ENCODE measurements at regions of chr9 and their contacts with region 1.

Region 1: GRCh38 chr9:17669206-17669605 is 90.3 kb downstream of the SH3GL2 start:
- DNase-seq: no peak
- H3K4me3 ChIP-seq: no peak overlapping the region
- H3K27ac ChIP-seq: no peak overlapping the region
- H3K4me1 ChIP-seq: no peaks in the 10 kb centered on the region
- H3K27me3 ChIP-seq: no peaks in the 10 kb centered on the region
- CTCF ChIP-seq: no peak

Region 2: DNA sequence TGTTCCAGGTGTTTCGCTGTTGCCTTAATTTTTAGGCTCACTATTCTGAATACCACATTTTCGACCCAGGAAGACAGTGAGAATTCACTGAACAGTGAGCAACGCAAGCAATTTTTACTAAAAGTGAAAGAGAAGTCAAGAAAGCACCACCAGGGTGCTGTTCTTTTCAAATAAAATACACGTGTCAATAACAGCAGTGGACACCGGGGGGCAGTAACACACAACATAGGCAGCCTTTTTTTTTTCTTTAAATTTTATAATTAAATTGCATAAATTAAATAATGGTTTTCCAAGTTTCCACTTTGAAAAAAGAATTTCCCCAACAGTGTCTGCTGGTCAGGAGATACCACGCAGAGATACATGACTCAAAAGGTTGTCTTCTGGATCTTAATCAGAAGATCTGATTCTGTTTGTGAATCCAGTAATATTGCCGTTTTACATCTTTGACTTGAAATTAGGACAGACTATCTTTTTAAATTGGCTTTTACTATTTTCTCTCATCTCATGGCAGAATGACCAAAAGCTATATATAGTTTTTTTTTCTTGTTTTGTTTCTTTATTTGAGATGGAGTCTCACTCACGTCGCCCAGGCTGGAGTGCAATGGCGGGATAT is 137.5 kb before region 1 on chr9:
- intact Hi-C with region 1: no loop called
- DNase-seq: no peak
- H3K4me3 ChIP-seq: no peak overlapping the region
- H3K27ac ChIP-seq: no peak overlapping the region
- H3K4me1 ChIP-seq: no peaks in the 10 kb centered on the region
- H3K27me3 ChIP-seq: peaks cover 12% of the 10 kb centered on the region
- CTCF ChIP-seq: peak; percentile 70

Region 3: GRCh38 chr9:17571825-17572224 is 97.4 kb before region 1 on chr9:
- intact Hi-C with region 1: loop called (anchors 5 kb)
- DNase-seq: no peak
- H3K4me3 ChIP-seq: no peak overlapping the region
- H3K27ac ChIP-seq: no peak overlapping the region
- H3K4me1 ChIP-seq: no peaks in the 10 kb centered on the region
- H3K27me3 ChIP-seq: peaks cover 23% of the 10 kb centered on the region
- CTCF ChIP-seq: no peak

Region 4: DNA sequence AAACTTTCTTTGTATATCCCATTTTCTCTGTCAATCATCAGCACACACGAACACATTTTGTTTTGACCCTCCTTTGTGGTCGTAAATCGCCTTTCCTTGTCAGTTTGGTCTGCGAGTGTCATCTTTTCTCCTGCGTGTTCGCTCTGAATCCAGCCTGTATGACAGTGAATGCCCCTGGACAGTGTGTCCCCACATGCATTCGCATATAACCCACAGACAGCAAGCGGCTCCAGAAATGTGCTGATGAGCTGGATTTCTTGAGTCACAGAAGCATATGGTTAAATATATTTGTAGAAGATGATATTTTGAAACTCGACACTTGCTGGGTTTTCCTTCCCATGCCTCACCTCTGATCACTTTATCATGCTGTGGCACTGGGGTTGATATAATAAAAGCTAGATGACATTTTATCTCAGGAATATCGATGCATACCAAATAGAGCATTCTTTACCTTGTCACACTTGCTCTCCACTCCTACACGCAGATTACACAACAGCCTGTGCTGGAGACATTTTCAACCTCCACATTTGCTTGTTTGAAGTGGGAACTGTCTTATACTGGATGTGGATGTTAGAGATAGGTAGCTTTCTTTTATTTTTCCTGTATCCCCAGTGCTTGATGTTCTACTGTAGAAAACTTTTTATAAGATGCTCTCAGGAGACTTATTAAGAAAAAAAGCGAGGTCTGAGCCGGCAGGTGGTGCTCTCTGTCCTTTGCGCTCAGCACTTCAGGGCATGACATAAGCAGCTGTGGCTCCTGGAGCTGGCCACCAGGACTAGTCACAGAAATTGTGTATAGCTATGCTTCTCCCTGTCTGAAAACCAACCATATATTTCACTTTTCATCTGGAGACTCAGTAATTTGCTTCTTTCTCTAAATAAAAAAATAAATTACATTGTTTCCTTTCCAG is 124.8 kb after region 1 on chr9:
- intact Hi-C with region 1: no loop called
- DNase-seq: no peak
- H3K4me3 ChIP-seq: no peak overlapping the region
- H3K27ac ChIP-seq: no peak overlapping the region
- H3K4me1 ChIP-seq: no peaks in the 10 kb centered on the region
- H3K27me3 ChIP-seq: no peaks in the 10 kb centered on the region
- CTCF ChIP-seq: no peak